Vagina (tissue), 2 donors: ENCODE measurements at regions of chr18 and their contacts with region 1.

Region 1: GRCh38 chr18:63016270-63016669 is 300.9 kb downstream of the PHLPP1 start:
- DNase-seq: no peak
- H3K4me3 ChIP-seq: no peak overlapping the region
- H3K27ac ChIP-seq: no peak overlapping the region
- H3K4me1 ChIP-seq: no peaks in the 10 kb centered on the region
- H3K27me3 ChIP-seq: no peaks in the 10 kb centered on the region
- CTCF ChIP-seq: peak in 2 of 3 experiments; percentile 69 to 75
- POLR2A ChIP-seq: no peak

Region 2: DNA sequence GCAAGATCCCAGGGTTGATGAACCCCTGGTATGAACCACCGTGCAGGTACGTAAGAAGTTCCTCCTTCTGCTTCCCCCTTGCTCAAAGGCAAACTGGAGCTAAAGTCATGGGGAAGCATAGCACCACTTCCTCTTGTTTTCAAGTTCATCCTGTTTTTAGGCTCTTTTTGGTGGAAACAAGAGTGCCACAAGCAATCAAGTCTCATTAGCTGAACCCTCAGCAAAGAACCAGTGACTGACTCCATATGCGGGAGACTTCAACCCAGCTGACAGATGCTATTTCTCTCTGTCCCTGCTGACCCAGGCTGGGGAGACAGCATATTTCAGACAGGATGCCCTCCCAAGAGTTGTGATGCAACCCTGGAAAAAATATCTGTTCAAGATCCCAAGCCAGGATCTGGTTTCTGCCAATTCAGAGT is 255.6 kb after region 1 on chr18:
- intact Hi-C with region 1: no loop called
- DNase-seq: no peak
- H3K4me3 ChIP-seq: no peak overlapping the region
- H3K27ac ChIP-seq: peak overlapping the region; percentile 27
- H3K4me1 ChIP-seq: peaks cover 43% of the 10 kb centered on the region
- H3K27me3 ChIP-seq: no peaks in the 10 kb centered on the region
- CTCF ChIP-seq: no peak
- POLR2A ChIP-seq: no peak

Region 3: GRCh38 chr18:63444567-63444966 is 428.3 kb after region 1 on chr18:
- intact Hi-C with region 1: loop called (anchors 5 kb)
- DNase-seq: no peak
- H3K4me3 ChIP-seq: no peak overlapping the region
- H3K27ac ChIP-seq: peak overlapping the region; percentile 73
- H3K4me1 ChIP-seq: peaks cover 24% of the 10 kb centered on the region
- H3K27me3 ChIP-seq: no peaks in the 10 kb centered on the region
- CTCF ChIP-seq: no peak
- POLR2A ChIP-seq: no peak